Activated B cell treated with CpG ODN at 0.5 μM for 24 hours (primary cell): ENCODE measurements at regions of chr7 and their contacts with region 1.

Region 1: DNA sequence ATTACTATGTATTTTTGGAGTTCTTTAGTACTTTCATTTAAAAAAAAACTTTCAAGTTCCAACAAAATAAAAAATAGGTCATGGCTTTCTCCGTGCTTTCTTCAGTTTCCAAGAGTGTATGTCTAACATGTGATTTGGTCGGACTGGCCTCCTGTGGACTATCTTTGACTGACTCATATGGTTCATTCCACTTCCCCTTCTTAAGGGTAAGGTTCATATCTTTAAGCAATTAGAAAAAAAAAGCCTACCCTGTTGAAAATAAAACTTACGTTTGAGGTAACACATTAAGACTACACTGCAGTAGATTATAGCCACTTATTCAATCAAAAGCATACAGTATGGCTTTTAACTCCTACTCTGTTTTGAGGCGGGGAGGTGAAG is 112.8 kb upstream of the AHR start:
- DNase-seq: no peak
- ATAC-seq: peak; percentile 97
- H3K4me3 Mint-ChIP-seq: no peak overlapping the region
- H3K27ac Mint-ChIP-seq: peak overlapping the region; percentile 67
- H3K4me1 Mint-ChIP-seq: peaks cover 16% of the 10 kb centered on the region
- H3K27me3 Mint-ChIP-seq: no peaks in the 10 kb centered on the region
- CTCF ChIP-seq: no peak

Region 2: DNA sequence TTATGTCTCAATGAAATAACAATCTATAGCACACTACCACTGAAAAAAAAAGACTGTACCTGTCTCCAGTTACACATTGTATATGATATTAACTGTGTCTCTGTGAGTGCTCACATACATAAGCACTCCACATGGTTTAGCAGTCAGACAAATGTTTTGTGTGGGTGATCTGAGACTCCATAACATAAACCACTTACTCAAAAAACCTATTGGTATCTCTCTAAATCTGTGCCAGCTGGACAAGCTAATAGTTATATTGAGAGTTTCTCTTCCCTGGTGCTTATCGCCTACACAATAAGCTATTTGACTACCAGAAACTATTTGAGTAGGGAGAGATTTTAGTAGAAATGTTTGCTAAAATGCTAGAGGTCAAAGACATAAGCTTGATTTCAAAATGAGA is 113.8 kb before region 1 on chr7:
- CTCF ChIA-PET with region 1: no interaction called
- POLR2A ChIA-PET with region 1: no interaction called
- intact Hi-C with region 1: loop called (anchors 5 kb)
- DNase-seq: no peak
- ATAC-seq: no peak
- H3K4me3 Mint-ChIP-seq: no peak overlapping the region
- H3K27ac Mint-ChIP-seq: no peak overlapping the region
- H3K4me1 Mint-ChIP-seq: peaks cover 16% of the 10 kb centered on the region
- H3K27me3 Mint-ChIP-seq: no peaks in the 10 kb centered on the region
- CTCF ChIP-seq: no peak

Region 3: GRCh38 chr7:17152721-17153120 is 33.0 kb before region 1 on chr7:
- CTCF ChIA-PET with region 1: no interaction called
- POLR2A ChIA-PET with region 1: no interaction called
- intact Hi-C with region 1: loop called (anchors 1 kb)
- DNase-seq: no peak
- ATAC-seq: peak; percentile 86
- H3K4me3 Mint-ChIP-seq: peak overlapping the region; percentile 62
- H3K27ac Mint-ChIP-seq: peak overlapping the region; percentile 63
- H3K4me1 Mint-ChIP-seq: peaks cover 40% of the 10 kb centered on the region
- H3K27me3 Mint-ChIP-seq: no peaks in the 10 kb centered on the region
- CTCF ChIP-seq: no peak